Activated T-helper 1 cell treated with anti-CD3 and anti-CD28 coated beads, Interleukin-12 subunit alpha, Interleukin-12 subunit beta, Interleukin-2, Interleukin-4 antibody, amounts not matched to agents 30 ng/mL and 10 ng/mL and 1 ng/mL, durations not matched to agents 14 hours and 24 hours and 36 hours (primary cell): ENCODE measurements at regions of chr1 and their contacts with region 1.

Region 1: GRCh38 chr1:26787706-26788514 is at the start of gene PIGV:
- DNase-seq: peak; percentile 84
- H3K4me3 Mint-ChIP-seq: peak within 1 kb of the TSS; percentile 97
- H3K27ac Mint-ChIP-seq: peak within 1 kb of the TSS; percentile 100
- H3K4me1 Mint-ChIP-seq: peaks cover 74% of the 10 kb centered on the region
- H3K27me3 Mint-ChIP-seq: peaks cover 1% of the 10 kb centered on the region
- total RNA-seq, gene PIGV: 18.5 and 22.6 TPM in 2 replicates

Region 2: GRCh38 chr1:26500488-26501175 is 287.3 kb before region 1 on chr1:
- intact Hi-C with region 1: loop called (anchors 1 kb)
- DNase-seq: peak; percentile 84
- H3K4me3 Mint-ChIP-seq: peak overlapping the region; percentile 90
- H3K27ac Mint-ChIP-seq: peak overlapping the region; percentile 91
- H3K4me1 Mint-ChIP-seq: peaks cover 18% of the 10 kb centered on the region
- H3K27me3 Mint-ChIP-seq: no peaks in the 10 kb centered on the region

Region 3: DNA sequence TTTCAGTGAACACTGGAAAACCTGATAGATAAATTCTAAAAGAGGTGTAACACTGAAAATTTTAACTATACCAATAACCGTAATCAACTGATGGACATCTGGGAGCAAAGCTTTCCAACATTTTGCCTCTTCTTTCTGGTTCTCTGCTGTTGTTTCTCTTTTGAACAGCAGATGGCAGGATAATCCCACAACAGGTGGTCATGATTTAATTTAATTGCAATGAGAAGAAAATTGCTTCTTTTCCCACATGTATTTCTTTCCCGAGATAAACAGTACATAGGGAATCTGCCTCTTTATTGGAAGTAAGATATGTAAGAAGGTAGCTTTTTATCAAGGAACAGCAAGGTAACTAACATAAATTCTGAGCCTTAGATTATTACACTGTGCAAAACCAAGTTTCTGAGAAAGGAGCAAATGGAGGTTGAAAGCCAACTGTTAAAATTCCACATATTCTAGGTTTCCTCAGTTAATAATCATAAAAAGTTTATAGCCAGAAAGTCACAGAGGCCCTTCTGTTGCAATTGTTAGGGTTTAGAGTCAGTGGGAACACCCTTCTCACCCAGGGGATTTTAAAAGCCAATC is 185.4 kb before region 1 on chr1:
- intact Hi-C with region 1: loop called (anchors 1 kb)
- DNase-seq: peak; percentile 36
- H3K4me3 Mint-ChIP-seq: no peak overlapping the region
- H3K27ac Mint-ChIP-seq: no peak overlapping the region
- H3K4me1 Mint-ChIP-seq: peaks cover 15% of the 10 kb centered on the region
- H3K27me3 Mint-ChIP-seq: peaks cover 4% of the 10 kb centered on the region

Region 4: DNA sequence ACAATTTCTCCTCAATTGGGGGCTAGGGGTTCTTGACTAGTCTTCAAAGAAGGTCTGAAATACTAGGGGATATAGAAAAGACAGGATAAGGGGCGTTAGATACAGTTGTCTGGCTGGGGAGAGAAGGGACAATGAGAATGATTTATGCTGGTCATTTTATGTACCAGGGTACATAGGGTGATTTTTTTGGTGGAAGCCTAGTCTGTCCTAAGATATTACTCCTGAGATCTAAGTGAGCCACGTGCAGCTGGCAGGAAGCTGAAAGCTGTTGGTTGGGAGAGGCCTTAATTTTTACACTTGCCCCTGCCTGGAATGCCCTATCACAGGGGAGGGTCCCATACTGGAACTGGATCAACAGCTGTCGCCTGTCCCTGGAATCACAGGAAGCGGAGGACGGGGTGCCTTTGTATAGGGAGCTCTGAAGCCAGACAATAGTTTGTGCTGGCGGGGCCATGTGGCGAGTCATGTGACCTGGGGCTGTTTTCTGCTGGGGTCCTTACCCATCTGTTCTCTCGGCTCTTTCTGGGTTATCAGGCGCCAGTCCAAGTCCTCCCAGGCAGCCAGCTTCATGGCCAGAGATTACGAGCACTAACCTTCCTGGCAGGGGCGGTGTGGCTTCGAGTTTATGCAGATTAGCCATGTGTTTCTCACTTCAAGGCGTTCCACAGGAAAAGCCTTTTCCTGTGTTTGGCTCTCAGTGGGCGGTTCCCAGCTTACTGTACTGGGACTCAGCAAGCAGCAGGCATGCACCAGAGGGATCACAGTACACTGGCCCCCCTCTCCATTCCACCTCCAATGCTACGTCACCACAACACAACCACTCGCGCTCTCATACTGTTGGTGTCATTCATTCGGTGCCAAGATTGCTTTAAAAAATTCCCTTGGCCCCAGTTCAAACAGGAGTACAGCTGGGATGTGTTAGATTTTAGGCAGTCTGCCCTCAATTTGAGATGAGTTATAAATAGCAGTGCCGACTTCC is 64.6 kb before region 1 on chr1:
- intact Hi-C with region 1: loop called (anchors 2 kb)
- DNase-seq: peak; percentile 25
- H3K4me3 Mint-ChIP-seq: peak overlapping the region; percentile 55
- H3K27ac Mint-ChIP-seq: peak overlapping the region; percentile 35
- H3K4me1 Mint-ChIP-seq: peaks cover 82% of the 10 kb centered on the region
- H3K27me3 Mint-ChIP-seq: no peaks in the 10 kb centered on the region

Region 5: GRCh38 chr1:26811057-26811456 is 23.1 kb after region 1 on chr1:
- intact Hi-C with region 1: loop called (anchors 2 kb)
- DNase-seq: no peak
- H3K4me3 Mint-ChIP-seq: no peak overlapping the region
- H3K27ac Mint-ChIP-seq: no peak overlapping the region
- H3K4me1 Mint-ChIP-seq: peaks cover 28% of the 10 kb centered on the region
- H3K27me3 Mint-ChIP-seq: no peaks in the 10 kb centered on the region

Region 6: DNA sequence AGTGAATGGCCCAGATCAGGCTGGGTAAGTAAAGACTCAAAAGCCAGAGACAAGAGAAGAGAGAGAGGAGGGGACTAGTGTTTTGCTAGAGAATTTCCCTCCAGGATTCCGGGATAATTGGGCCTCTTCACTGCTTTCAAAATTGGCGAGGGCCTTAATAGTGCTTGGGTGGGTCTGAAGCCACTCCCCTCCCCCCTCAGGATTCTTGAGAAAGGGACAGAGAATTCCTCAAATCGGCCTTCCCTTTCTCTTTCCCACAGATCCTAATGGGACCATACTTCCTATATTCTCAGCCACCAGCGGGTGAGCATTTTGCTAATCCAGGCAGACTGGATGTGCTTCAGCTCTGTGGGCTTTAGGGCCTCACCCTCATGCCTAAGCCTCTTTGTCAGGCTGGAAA is 87.0 kb after region 1 on chr1:
- intact Hi-C with region 1: loop called (anchors 1 kb)
- DNase-seq: no peak
- H3K4me3 Mint-ChIP-seq: no peak overlapping the region
- H3K27ac Mint-ChIP-seq: no peak overlapping the region
- H3K4me1 Mint-ChIP-seq: no peaks in the 10 kb centered on the region
- H3K27me3 Mint-ChIP-seq: no peaks in the 10 kb centered on the region